ENCODE measurements at regions of chr12 and their contacts with region 1.

Region 1: DNA sequence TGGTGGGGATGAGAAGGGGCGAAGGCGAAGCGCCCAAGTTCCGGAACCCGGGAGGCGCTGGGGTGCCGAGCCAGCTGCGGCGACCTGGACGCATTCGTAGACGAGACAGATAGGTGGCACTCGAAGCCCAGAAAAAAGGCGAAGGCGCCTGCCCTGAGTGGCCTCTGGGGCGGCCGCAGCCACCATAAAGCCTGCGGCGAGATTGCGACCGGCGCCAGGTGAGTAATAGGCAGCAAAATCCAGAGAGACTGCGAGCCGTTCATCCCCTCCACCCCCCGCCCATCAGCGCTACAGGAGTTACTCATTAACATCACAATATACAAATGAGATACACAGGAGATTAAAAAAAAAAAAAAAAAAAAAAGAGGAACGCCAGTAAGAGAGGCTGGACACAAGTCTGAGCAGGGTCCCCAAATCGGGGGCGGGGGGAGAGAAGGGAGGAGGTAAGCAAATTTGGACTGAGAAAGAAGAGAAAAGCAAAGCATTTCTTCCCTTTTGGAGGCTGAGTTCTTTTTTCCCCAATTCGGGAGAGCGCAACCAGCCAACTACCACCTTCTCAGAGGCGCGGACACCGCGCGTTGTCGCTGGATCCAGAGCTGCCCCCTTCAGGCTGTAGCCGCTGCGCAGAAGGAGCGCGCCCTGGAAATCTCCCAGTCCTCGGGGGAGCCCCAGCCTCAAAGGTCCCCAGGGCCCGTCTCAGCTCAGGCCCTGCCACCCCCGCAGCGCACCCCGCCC is 15.7 kb downstream of the TBX3 start:
- DNase-seq: peak; percentile 93 to 95
- H3K4me3 ChIP-seq: peak overlapping the region; percentile 32
- H3K4me3 Mint-ChIP-seq: peak overlapping the region; percentile 74
- H3K27ac Mint-ChIP-seq: peak overlapping the region; percentile 79
- H3K4me1 ChIP-seq: peaks cover 13% of the 10 kb centered on the region
- H3K4me1 Mint-ChIP-seq: no peaks in the 10 kb centered on the region
- H3K27me3 ChIP-seq: no peaks in the 10 kb centered on the region
- H3K27me3 Mint-ChIP-seq: no peaks in the 10 kb centered on the region
- CTCF ChIP-seq: peak; percentile 59 to 76

Region 2: GRCh38 chr12:114625294-114625851 is 42.9 kb before region 1 on chr12:
- CTCF ChIA-PET with region 1: no interaction called
- POLR2A ChIA-PET with region 1: interaction called, 10 read pairs
- intact Hi-C with region 1: no loop called
- DNase-seq: peak; percentile 76 to 81
- H3K4me3 ChIP-seq: no peak overlapping the region
- H3K4me3 Mint-ChIP-seq: no peak overlapping the region
- H3K27ac Mint-ChIP-seq: peak overlapping the region; percentile 61
- H3K4me1 ChIP-seq: peaks cover 30% of the 10 kb centered on the region
- H3K4me1 Mint-ChIP-seq: peaks cover 44% of the 10 kb centered on the region
- H3K27me3 ChIP-seq: no peaks in the 10 kb centered on the region
- H3K27me3 Mint-ChIP-seq: no peaks in the 10 kb centered on the region
- CTCF ChIP-seq: peak; percentile 80 to 84

Region 3: DNA sequence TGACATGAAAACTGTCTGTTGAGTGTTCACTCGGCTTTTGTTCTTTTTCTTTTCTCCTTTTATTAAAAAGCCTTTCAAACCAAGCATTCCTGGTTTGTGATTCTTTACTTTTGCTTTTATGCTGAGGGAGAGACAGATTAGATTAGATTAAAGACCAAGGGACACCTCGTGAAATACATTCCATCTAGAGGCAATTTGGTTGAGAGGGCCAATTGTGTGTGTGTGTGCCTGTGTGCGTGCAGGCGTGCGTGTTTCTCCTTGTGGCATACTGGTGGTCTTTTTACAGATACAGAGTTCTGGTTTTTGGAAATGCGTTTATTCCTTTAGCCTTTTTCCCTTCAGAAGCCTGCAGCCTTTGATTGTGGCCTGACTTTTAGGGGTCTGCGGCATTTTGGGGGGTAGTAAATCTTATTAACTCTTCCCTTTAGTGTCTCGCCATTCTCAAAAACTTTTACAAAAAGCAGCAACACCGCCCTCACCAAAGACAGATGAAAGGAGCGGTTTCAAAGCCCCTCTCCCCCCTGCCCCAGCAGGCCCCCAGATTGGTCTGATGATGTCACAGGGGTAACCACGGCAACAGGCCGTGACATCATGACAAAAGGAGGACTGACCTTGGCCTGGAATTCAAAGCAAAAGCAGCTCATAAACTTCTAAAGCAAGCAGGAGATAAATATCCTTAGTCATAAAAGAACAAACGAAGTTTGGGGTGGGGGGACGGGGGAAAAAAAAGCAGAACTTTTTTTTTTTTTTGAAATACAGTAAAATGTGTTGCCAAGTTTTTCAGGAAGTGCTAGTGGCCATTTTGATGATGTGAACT is 99.8 kb after region 1 on chr12:
- CTCF ChIA-PET with region 1: interaction called, 5 read pairs
- POLR2A ChIA-PET with region 1: no interaction called
- intact Hi-C with region 1: loop called (anchors 1 kb)
- DNase-seq: peak; percentile 51 to 67
- H3K4me3 ChIP-seq: no peak overlapping the region
- H3K4me3 Mint-ChIP-seq: peak overlapping the region; percentile 2
- H3K27ac Mint-ChIP-seq: peak overlapping the region; percentile 99
- H3K4me1 ChIP-seq: peaks cover 34% of the 10 kb centered on the region
- H3K4me1 Mint-ChIP-seq: peaks cover 17% of the 10 kb centered on the region
- H3K27me3 ChIP-seq: no peaks in the 10 kb centered on the region
- H3K27me3 Mint-ChIP-seq: no peaks in the 10 kb centered on the region
- CTCF ChIP-seq: no peak

Region 4: GRCh38 chr12:115158816-115159215 is 490.5 kb after region 1 on chr12:
- CTCF ChIA-PET with region 1: no interaction called
- POLR2A ChIA-PET with region 1: no interaction called
- intact Hi-C with region 1: loop called (anchors 2 kb)
- DNase-seq: peak; percentile 69 to 79
- H3K4me3 ChIP-seq: no peak overlapping the region
- H3K4me3 Mint-ChIP-seq: no peak overlapping the region
- H3K27ac Mint-ChIP-seq: no peak overlapping the region
- H3K4me1 ChIP-seq: peaks cover 40% of the 10 kb centered on the region
- H3K4me1 Mint-ChIP-seq: peaks cover 40% of the 10 kb centered on the region
- H3K27me3 ChIP-seq: no peaks in the 10 kb centered on the region
- H3K27me3 Mint-ChIP-seq: no peaks in the 10 kb centered on the region
- CTCF ChIP-seq: no peak

Region 5: GRCh38 chr12:115166698-115167315 is 498.5 kb after region 1 on chr12:
- CTCF ChIA-PET with region 1: no interaction called
- POLR2A ChIA-PET with region 1: no interaction called
- intact Hi-C with region 1: loop called (anchors 1 kb)
- DNase-seq: no peak
- H3K4me3 ChIP-seq: no peak overlapping the region
- H3K4me3 Mint-ChIP-seq: no peak overlapping the region
- H3K27ac Mint-ChIP-seq: no peak overlapping the region
- H3K4me1 ChIP-seq: peaks cover 21% of the 10 kb centered on the region
- H3K4me1 Mint-ChIP-seq: peaks cover 10% of the 10 kb centered on the region
- H3K27me3 ChIP-seq: no peaks in the 10 kb centered on the region
- H3K27me3 Mint-ChIP-seq: no peaks in the 10 kb centered on the region
- CTCF ChIP-seq: peak in 1 of 2 experiments; percentile 11

Region 6: GRCh38 chr12:115204957-115205754 is 536.8 kb after region 1 on chr12:
- CTCF ChIA-PET with region 1: no interaction called
- POLR2A ChIA-PET with region 1: no interaction called
- intact Hi-C with region 1: no loop called
- DNase-seq: no peak
- H3K4me3 ChIP-seq: no peak overlapping the region
- H3K4me3 Mint-ChIP-seq: no peak overlapping the region
- H3K27ac Mint-ChIP-seq: no peak overlapping the region
- H3K4me1 ChIP-seq: peaks cover under 1% of the 10 kb centered on the region
- H3K4me1 Mint-ChIP-seq: peaks cover 9% of the 10 kb centered on the region
- H3K27me3 ChIP-seq: no peaks in the 10 kb centered on the region
- H3K27me3 Mint-ChIP-seq: no peaks in the 10 kb centered on the region
- CTCF ChIP-seq: no peak

Region 7: DNA sequence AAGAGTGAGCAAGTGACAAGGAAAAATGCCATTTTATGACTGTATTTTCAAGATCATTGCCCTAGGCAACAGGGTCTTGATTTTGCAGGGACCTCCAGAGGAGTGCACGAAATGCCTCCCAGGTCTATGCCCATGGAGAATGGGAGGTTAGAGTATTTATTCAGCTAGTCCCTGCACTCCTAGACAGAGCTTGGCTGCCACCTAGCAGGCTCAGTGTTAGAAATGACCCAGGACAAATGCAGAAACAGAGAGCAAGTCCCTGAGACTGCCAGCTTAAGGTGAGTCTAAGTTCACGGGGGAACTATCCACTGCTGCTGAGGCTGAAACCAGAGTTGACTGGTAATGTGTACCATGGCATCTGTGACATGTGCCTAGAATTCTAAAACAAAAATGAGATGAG is 1102.7 kb after region 1 on chr12:
- CTCF ChIA-PET with region 1: no interaction called
- POLR2A ChIA-PET with region 1: no interaction called
- intact Hi-C with region 1: loop called (anchors 5 kb)
- DNase-seq: peak; percentile 22 to 45
- H3K4me3 ChIP-seq: no peak overlapping the region
- H3K4me3 Mint-ChIP-seq: no peak overlapping the region
- H3K27ac Mint-ChIP-seq: no peak overlapping the region
- H3K4me1 ChIP-seq: peaks cover 10% of the 10 kb centered on the region; the same call in 1 of the 2 replicates
- H3K4me1 Mint-ChIP-seq: peaks cover 4% of the 10 kb centered on the region
- H3K27me3 ChIP-seq: no peaks in the 10 kb centered on the region
- H3K27me3 Mint-ChIP-seq: peaks cover 5% of the 10 kb centered on the region
- CTCF ChIP-seq: peak; percentile 26 to 37

Measured in Caco-2 (cell line).